Aorta (tissue), 5 donors: ENCODE measurements at regions of chr14 and their contacts with region 1.

Region 1: DNA sequence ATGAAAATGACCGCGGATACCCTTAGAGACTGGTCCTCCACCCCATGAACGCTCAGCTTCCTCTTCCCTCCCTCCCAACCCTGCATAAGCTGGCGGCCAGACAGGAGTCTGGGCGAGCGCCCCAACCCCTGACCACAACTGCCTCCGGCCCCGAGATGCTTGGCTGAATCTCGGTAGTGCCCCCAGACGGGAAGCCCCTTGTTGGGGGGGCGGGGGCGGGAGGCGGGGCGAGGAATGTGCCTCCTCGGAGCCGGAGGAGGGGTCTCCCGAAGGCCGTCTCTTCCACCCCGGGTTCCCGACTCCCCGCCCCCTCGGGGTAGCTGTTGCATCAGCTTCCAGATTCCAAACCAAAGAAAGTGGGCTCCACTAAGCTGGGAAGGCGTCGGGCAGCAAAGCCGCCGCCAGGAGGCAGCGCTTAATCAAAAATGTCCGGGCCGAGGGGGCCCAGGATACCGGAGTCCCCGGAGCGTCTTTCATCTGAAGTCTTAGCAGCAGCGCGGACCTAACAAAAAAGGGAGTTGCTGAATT is 7.1 kb upstream of the MRPL52 start:
- DNase-seq: peak; percentile 92 to 94
- ATAC-seq: peak; percentile 89
- H3K4me3 ChIP-seq: peak overlapping the region; percentile 33 to 66
- H3K27ac ChIP-seq: peak overlapping the region in 1 of 2 donors; percentile 67
- H3K4me1 ChIP-seq: peaks cover 0 to 3% of the 10 kb centered on the region in 2 donors
- H3K27me3 ChIP-seq: no peaks in the 10 kb centered on the region

Region 2: DNA sequence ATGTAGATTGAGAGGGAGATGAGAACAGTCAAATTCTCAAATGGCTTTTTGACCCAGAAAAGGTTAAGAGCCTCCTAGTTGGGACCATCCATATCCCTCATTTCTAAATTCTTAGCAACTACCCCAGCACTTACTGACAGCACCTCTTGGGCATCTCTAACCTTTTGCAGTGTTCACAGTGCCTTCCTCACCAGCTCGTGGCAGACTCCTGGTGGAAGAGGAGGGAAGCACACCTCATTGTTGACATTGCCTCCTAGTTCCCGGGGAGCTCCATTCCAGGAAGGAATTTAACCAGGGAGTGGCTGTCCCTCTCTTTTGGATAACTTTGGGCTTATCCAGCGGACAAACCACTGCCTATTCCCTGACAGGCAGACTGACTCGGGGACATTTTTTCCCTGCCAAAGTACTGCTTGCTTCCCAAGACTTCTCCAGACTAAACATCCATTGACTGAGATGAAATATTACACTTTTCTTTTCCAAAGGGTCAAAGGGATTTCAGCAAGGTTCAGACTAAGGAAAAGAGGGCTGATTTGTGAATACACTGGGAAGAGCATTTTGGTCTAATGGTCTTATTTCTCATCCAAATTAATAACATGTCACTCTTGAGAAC is 169.5 kb before region 1 on chr14:
- intact Hi-C with region 1: loop called in 1 of 2 experiments (anchors 10 kb)
- DNase-seq: peak in 1 of 2 donors; percentile 57
- ATAC-seq: peak; percentile 58
- H3K4me3 ChIP-seq: no peak overlapping the region
- H3K27ac ChIP-seq: no peak overlapping the region
- H3K4me1 ChIP-seq: no peaks in the 10 kb centered on the region
- H3K27me3 ChIP-seq: no peaks in the 10 kb centered on the region

Region 3: DNA sequence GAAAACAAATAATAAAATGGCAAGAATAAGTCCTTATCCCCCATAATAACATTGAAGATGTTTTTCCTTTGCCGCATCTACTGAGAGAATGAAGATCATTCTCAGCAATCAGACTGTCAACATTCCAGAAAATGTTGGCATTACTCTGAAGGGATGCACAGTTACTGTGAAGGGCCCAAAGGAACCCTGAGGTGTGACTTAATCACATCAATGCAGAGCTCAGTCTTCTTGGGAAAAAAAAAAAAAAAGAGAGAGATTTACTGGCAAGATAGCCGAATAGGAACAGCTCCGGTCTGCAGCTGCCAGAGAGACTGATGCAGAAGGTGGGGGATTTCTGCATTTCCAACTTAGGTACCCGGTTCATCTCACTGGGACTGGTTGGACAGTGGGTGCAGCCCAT is 137.2 kb before region 1 on chr14:
- intact Hi-C with region 1: no loop called
- DNase-seq: no peak
- ATAC-seq: no peak
- H3K4me3 ChIP-seq: no peak overlapping the region
- H3K27ac ChIP-seq: no peak overlapping the region
- H3K4me1 ChIP-seq: no peaks in the 10 kb centered on the region
- H3K27me3 ChIP-seq: no peaks in the 10 kb centered on the region

Region 4: GRCh38 chr14:22766456-22767322 is 55.9 kb before region 1 on chr14 and contains the start of gene OXA1L:
- intact Hi-C with region 1: loop called (anchors 2 to 5 kb)
- DNase-seq: peak; percentile 98 to 99
- ATAC-seq: peak; percentile 95
- H3K4me3 ChIP-seq: peak within 1 kb of the TSS; percentile 70 to 85
- H3K27ac ChIP-seq: peak within 1 kb of the TSS; percentile 53 to 57
- H3K4me1 ChIP-seq: no peaks in the 10 kb centered on the region
- H3K27me3 ChIP-seq: no peaks in the 10 kb centered on the region
- total RNA-seq, gene OXA1L: 60.0 to 74.8 TPM

Region 5: DNA sequence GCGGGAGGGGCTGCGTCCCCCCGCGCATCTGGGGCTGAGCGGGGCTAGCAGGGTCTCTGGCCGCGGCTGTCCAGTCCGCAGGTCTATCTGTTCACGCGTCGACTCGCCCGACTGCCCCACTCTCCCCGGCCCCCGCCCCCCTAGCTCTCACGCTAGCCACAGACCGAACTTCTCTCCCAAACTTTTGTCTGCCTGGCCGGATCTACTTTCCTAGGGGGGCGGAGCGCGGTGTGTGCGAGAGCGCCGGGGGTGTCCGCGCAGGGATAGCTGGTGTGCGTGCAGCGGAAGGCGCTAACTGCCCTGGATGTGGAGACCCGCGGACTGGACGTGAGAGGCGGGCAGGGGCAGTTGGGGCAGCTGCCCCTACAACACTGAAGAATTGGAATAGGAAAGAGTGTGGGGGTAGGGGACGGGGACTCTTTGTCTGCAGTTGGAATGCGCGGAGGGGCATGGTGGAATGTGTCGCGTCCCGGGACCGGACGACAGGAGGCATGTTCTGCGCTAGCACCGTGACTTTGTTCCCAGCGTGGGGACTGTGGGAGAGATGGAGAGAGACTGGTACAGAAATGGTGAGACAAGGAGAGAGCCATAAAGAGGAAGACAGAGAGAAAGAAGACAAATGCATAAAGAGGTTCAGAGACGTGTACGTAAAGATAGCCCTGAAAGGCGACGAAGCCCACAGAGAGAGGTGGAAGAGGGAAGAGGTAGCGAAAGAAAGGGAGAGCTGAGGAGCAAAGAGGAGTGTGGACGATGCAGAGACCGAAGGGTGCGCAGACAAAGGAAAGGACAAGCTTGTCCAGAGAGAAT is 160.0 kb after region 1 on chr14 and contains the start of gene AJUBA:
- intact Hi-C with region 1: no loop called
- DNase-seq: peak; percentile 94 to 97
- ATAC-seq: peak; percentile 92
- H3K4me3 ChIP-seq: peak within 1 kb of the TSS; percentile 49 to 59
- H3K27ac ChIP-seq: peak within 1 kb of the TSS; percentile 47 to 77
- H3K4me1 ChIP-seq: peaks cover 0 to 5% of the 10 kb centered on the region in 2 donors
- H3K27me3 ChIP-seq: no peaks in the 10 kb centered on the region
- total RNA-seq, gene AJUBA: 12.9 to 16.2 TPM